ENCODE measurements at regions of chr18 and their contacts with region 1.

Region 1: GRCh38 chr18:21897811-21898210 is 157.2 kb downstream of the MIB1 start:
- DNase-seq: peak; percentile 28
- ATAC-seq: peak; percentile 68 to 84

Region 2: GRCh38 chr18:21820035-21820810 is 77.6 kb before region 1 on chr18:
- intact Hi-C with region 1: no loop called
- DNase-seq: no peak
- ATAC-seq: no peak

Region 3: DNA sequence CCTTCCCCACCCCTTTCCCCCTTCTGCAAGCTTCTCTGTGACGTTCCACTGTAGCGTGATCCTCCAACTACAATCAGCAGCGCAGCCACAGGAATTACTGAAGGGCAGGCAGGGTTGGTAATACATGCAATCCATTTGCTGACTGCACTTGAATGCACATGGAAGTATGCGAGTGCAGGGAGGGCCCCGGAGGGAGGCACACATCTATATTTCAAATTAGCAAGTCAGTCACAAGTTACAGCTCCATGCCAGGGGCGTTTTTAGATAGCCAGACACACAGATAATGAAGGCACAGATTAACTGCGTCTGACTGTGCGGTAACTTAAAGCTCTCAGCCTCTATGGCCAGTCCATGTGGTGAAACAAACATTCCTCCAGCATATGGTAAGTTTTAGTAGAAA is 62.4 kb after region 1 on chr18:
- intact Hi-C with region 1: no loop called
- DNase-seq: no peak
- ATAC-seq: peak in 1 of 2 donors; percentile 27

Region 4: GRCh38 chr18:22778996-22779395 is 881.2 kb after region 1 on chr18:
- intact Hi-C with region 1: loop called in 1 of 2 experiments (anchors 10 kb)
- DNase-seq: no peak
- ATAC-seq: peak; percentile 89 to 90

Region 5: GRCh38 chr18:22796069-22796468 is 898.3 kb after region 1 on chr18:
- intact Hi-C with region 1: loop called in 1 of 2 experiments (anchors 5 kb)
- DNase-seq: no peak
- ATAC-seq: no peak